Psoas muscle (tissue), 8 donors: ENCODE measurements at regions of chr4 and their contacts with region 1.

Region 1: GRCh38 chr4:182938205-182938645 is 21.0 kb upstream of the DCTD start:
- DNase-seq: peak; percentile 66 to 78
- ATAC-seq: peak; percentile 80 to 95 (median 85)
- H3K4me3 ChIP-seq: no peak overlapping the region
- H3K27ac ChIP-seq: no peak overlapping the region
- H3K4me1 ChIP-seq: no peaks in the 10 kb centered on the region
- H3K27me3 ChIP-seq: peaks cover 0 to 7% (median 0%) of the 10 kb centered on the region in 3 donors
- CTCF ChIP-seq: peak; percentile 85

Region 2: DNA sequence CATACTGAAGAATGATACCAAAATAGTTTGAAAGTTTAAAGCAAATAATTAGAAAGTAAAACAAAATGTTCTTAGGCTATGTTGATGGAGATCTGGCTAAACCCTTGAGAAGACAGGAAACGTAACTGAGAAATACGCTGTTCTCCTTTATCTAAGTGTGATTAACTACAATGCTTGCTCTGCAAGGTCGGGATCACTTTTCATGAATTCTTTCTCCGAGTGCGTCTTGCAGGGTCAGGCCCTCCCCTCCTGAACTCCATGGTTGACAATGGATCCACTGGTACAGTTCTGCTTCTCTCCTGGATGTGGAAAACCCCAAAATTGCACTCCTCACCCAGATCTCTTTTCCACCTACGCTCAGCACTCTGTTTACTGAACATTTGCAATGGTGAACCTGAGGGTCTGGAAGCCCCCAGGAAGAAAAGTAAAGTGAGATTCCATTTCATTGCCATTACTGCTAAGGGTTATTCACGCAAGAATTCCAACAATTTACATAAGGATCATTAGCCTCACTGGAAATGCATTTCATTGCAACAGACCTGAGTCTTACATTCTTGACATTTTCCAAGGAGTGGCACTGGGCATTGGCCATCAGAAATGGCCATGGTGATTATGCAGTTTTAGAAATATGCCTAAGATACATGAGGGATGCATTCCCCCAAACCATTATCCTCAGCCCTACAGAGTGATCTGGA is 136.2 kb after region 1 on chr4:
- intact Hi-C with region 1: loop called (anchors 5 to 10 kb)
- DNase-seq: no peak
- ATAC-seq: no peak
- H3K4me3 ChIP-seq: no peak overlapping the region
- H3K27ac ChIP-seq: no peak overlapping the region
- H3K4me1 ChIP-seq: no peaks in the 10 kb centered on the region
- H3K27me3 ChIP-seq: no peaks in the 10 kb centered on the region
- CTCF ChIP-seq: no peak

Region 3: GRCh38 chr4:183261953-183262775 is 323.9 kb after region 1 on chr4:
- intact Hi-C with region 1: loop called (anchors 5 kb)
- DNase-seq: peak; percentile 75 to 83
- ATAC-seq: peak; percentile 93 to 98 (median 96)
- H3K4me3 ChIP-seq: no peak overlapping the region
- H3K27ac ChIP-seq: peak overlapping the region; percentile 51
- H3K4me1 ChIP-seq: peaks cover 4% of the 10 kb centered on the region
- H3K27me3 ChIP-seq: no peaks in the 10 kb centered on the region
- CTCF ChIP-seq: peak; percentile 75